Endothelial cell of umbilical vein (primary cell): ENCODE measurements at regions of chr20 and their contacts with region 1.

Region 1: GRCh38 chr20:11267131-11267761 is 593.4 kb upstream of the JAG1 start:
- DNase-seq: peak; percentile 94
- H3K4me3 ChIP-seq: no peak overlapping the region
- H3K27ac ChIP-seq: peak overlapping the region; percentile 56
- H3K4me1 ChIP-seq: peaks cover 23% of the 10 kb centered on the region
- H3K27me3 ChIP-seq: no peaks in the 10 kb centered on the region
- CTCF ChIP-seq: peak in 1 of 2 donors; percentile 13
- POLR2A ChIP-seq: no peak

Region 2: DNA sequence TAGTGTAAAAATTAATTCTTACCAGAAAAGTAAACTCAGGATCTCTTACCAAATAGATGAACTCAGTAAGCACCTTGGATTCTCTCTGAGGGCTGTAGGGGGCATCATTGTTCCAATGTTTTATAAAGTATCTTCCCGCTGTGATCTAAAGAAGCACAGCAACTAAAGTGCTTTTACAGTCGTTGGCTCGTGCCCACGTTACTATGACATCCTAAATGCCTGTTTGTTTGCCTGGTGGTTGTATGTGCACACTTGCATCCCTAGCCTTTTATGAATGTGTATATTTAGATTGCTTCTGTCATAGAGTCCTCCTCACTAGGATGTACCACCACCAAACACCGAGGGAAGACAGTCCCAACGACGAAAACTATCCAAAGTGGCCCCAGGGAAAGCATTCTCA is 797.6 kb before region 1 on chr20:
- CTCF ChIA-PET with region 1: no interaction called
- POLR2A ChIA-PET with region 1: no interaction called
- dilution Hi-C with region 1: no loop called
- intact Hi-C with region 1: loop called (anchors 2 kb)
- DNase-seq: peak; percentile 90
- H3K4me3 ChIP-seq: no peak overlapping the region
- H3K27ac ChIP-seq: peak overlapping the region; percentile 9
- H3K4me1 ChIP-seq: peaks cover 40% of the 10 kb centered on the region
- H3K27me3 ChIP-seq: no peaks in the 10 kb centered on the region
- CTCF ChIP-seq: peak; percentile 49 to 50
- POLR2A ChIP-seq: no peak

Region 3: DNA sequence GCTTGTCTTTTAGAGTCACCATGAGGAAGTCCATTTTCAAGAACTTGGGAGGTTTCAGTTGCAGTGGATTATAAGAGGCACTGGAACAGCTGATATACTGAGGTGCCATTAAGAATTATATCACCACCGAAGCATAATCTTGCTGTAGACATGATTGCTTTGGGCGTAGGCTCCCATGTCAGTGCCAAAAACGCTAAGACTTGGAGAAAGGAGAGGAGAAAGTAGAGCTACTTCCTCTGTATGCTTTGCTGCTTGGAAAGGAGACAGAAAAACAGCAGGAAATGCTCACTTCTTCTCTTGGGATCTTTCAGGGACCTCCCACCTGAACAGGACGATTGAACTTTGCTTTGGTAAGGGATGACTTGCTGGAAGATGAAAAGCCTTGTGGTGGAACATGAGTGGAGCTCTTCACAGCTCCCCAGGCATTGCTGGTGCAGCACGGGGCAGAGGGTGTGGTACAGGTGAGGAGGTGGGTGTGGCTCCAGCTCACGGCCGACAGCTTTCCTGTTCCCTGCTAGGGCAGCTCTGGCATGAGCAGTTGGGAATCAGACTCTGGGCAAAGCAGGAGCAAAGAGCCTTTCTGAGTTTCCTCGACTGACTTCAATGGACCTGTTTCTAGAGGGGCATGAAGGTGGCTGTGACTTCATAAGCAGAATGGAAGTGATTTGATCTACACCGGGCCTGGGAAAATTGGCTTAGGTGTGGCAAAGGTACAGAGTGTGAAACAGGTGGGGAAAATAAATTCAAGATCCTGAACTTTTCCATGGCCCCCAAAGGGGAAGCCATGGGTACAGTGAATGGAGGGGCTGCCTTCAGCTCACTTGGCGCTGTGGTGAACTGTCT is 402.9 kb before region 1 on chr20:
- CTCF ChIA-PET with region 1: no interaction called
- POLR2A ChIA-PET with region 1: no interaction called
- dilution Hi-C with region 1: no loop called
- intact Hi-C with region 1: loop called (anchors 2 kb)
- DNase-seq: peak; percentile 48
- H3K4me3 ChIP-seq: no peak overlapping the region
- H3K27ac ChIP-seq: peak overlapping the region; percentile 59
- H3K4me1 ChIP-seq: peaks cover 32% of the 10 kb centered on the region
- H3K27me3 ChIP-seq: no peaks in the 10 kb centered on the region
- CTCF ChIP-seq: no peak
- POLR2A ChIP-seq: no peak

Region 4: DNA sequence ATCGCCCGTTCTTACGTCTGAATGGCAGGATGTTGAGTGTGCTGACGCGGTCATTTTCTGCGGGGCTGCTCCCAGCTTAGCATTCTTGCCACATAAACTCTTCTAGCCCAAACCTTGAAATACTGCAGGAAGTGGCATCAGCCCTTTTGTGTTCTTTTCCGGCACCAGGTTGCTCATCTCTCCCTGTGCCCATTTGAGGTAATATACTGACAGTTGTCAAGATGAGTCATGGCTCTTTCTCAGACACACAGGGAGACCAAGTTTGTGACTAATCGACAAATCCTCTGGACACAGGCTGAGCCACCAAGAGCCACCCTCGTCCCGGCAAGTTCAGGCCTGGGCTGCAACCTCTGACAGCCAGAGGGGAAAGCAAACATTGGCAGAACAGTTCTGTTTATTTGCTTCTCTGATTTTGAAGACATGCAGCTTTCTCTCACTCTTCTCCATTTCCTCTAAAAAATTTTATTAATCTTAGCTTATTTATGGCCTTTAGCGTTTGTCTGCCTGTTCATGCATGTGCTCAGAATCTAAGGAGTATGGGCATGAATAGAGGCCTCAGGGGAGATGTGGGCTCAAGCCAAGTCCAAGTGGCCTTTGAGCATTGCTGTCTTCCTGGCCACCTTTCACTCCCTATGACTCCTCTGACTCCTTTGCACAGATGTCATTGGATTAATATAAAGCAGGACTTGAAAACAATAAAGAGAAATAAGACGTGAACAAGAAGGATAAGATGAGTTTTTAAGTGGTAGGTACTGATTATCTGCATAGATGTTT is 265.3 kb before region 1 on chr20:
- CTCF ChIA-PET with region 1: interaction called, 3 read pairs
- POLR2A ChIA-PET with region 1: no interaction called
- dilution Hi-C with region 1: no loop called
- intact Hi-C with region 1: loop called (anchors 10 kb)
- DNase-seq: peak; percentile 71
- H3K4me3 ChIP-seq: no peak overlapping the region
- H3K27ac ChIP-seq: peak overlapping the region; percentile 50
- H3K4me1 ChIP-seq: peaks cover 29% of the 10 kb centered on the region
- H3K27me3 ChIP-seq: no peaks in the 10 kb centered on the region
- CTCF ChIP-seq: no peak
- POLR2A ChIP-seq: no peak

Region 5: DNA sequence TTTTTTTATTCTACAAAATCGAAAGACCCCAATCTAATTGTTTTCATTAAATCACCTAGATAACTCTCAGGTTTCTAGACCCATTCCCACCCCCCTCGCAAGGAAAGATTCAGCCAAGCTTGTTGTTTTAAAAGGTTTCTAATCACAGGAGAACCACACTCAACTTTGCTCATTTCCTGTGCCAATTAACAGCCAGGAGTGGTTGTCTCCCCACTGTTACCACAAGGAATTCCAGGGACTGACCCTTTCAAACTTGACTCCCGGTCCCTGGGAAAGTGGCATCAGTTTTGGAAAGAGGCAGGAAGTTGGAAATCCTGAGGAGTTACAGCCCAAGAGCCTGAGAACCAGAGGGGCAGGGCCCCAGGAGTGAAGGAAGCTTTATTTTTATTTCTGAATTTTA is 32.2 kb before region 1 on chr20:
- CTCF ChIA-PET with region 1: no interaction called
- POLR2A ChIA-PET with region 1: no interaction called
- dilution Hi-C with region 1: no loop called
- intact Hi-C with region 1: loop called (anchors 1 kb)
- DNase-seq: peak; percentile 87
- H3K4me3 ChIP-seq: no peak overlapping the region
- H3K27ac ChIP-seq: peak overlapping the region; percentile 73
- H3K4me1 ChIP-seq: peaks cover 23% of the 10 kb centered on the region
- H3K27me3 ChIP-seq: no peaks in the 10 kb centered on the region
- CTCF ChIP-seq: no peak
- POLR2A ChIP-seq: no peak